MCF 10A (cell line): ENCODE measurements at regions of chr12 and their contacts with region 1.

Region 1: GRCh38 chr12:10016881-10017280 is 6.5 kb downstream of the CLEC12B start:
- DNase-seq: peak; percentile 37
- H3K4me3 Mint-ChIP-seq: no peak overlapping the region
- H3K27ac Mint-ChIP-seq: peak overlapping the region; percentile 2
- H3K4me1 Mint-ChIP-seq: peaks cover 8% of the 10 kb centered on the region
- H3K27me3 Mint-ChIP-seq: no peaks in the 10 kb centered on the region
- CTCF ChIP-seq: no peak

Region 2: GRCh38 chr12:10001171-10001776 is 15.6 kb before region 1 on chr12:
- CTCF ChIA-PET with region 1: interaction called, 51 read pairs
- POLR2A ChIA-PET with region 1: no interaction called
- intact Hi-C with region 1: no loop called
- DNase-seq: no peak
- H3K4me3 Mint-ChIP-seq: no peak overlapping the region
- H3K27ac Mint-ChIP-seq: no peak overlapping the region
- H3K4me1 Mint-ChIP-seq: no peaks in the 10 kb centered on the region
- H3K27me3 Mint-ChIP-seq: no peaks in the 10 kb centered on the region
- CTCF ChIP-seq: no peak